ENCODE measurements at regions of chr3 and their contacts with region 1.

Region 1: DNA sequence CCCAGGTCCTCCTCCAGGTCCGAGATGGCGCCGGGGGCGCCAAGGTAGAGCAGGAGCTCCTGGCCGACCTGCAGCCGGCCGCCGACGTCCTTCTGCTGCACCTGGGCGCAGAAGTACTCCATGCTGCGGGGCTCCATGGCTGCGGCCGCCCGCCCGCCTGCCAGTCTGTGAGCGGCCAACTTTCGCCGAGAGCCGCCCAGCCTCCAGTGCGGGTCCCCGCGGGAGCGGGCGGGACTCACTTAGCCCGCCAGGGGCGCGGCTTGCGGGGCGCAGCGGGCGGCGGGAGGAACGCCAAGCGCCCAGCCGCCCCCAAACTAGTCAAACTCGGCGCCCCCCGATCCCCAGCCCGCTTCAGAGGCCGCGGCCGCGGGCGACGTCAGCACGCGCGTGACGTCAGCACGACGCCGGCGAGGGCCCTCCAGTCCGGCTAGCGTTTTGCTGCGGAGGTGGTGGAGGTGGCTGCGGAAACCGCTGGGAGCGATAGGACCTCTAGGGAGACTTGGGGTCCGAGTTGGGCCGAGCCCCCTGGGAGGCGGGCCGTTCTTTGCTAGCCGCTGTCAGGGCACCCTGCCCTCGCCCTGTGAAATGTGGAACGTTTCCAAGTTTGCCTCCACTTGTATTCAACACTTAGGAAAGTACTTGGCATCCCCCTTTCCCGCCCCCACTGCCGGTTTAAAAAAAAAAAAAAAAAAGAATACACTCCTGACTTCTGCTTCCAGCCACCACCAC is at the start of gene CLASP2:
- DNase-seq: peak; percentile 91 to 95 (median 95)
- ATAC-seq: peak; percentile 98 to 99
- H3K4me3 ChIP-seq: peak within 1 kb of the TSS; percentile 88
- H3K27ac ChIP-seq: peak within 1 kb of the TSS; percentile 97
- H3K4me1 ChIP-seq: peaks cover 2% of the 10 kb centered on the region
- H3K27me3 ChIP-seq: no peaks in the 10 kb centered on the region
- total RNA-seq, gene CLASP2: 55.3 to 77.1 (median 67.4) TPM

Region 2: DNA sequence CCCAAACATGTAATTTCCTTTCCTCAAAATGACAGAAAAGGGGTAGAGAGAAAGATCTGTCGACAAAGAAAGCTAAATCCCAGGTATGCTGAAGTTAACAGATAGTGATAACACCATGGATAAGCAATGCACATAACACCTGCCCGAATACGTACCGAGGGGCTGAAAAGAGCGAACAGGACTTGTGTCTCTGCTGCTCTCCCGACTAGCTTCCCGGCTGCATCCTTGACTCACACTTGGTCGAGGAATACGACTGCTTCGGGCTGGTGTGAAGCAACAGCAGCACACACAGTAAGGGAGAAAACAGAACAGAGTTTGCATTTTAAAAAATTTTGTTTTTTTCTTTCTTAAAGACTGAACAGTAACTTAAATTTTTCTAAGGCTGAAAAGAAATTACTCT is 136.4 kb before region 1 on chr3:
- intact Hi-C with region 1: no loop called
- DNase-seq: no peak
- ATAC-seq: no peak
- H3K4me3 ChIP-seq: no peak overlapping the region
- H3K27ac ChIP-seq: no peak overlapping the region
- H3K4me1 ChIP-seq: no peaks in the 10 kb centered on the region
- H3K27me3 ChIP-seq: no peaks in the 10 kb centered on the region

Region 3: DNA sequence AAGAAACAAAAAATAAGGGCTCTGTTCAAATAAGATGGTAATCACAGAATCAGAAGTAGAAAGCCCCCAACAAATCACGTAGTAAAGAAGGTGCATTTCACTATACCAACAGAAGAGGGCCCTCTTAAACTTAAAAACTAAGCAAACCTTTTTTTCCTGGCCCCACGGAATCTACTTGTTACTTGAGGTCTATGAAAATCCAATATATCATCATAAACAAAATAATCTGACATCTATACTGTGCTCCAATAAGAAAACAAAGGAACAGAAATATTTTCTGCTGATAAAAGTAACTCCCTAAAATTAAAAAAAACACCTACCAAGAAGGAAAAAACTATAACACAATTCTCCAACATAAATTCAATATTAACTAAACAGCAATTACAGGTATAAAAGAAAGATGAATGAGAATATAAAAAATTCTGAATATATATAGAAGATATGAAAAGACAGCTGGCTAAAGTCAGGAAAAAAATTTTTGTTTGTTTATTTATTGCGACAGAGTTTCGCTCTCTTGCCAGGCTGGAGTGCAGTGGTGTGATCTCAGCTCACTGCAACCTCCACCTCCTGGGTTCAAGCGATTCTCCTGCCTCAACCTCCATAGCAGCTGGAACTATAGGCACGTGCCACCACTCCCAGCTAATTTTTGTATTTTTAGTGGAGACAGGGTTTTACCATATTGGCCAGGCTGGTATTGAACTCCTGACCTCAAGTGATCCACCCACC is 81.7 kb before region 1 on chr3:
- intact Hi-C with region 1: loop called in 1 of 4 experiments (anchors 5 kb)
- DNase-seq: no peak
- ATAC-seq: no peak
- H3K4me3 ChIP-seq: no peak overlapping the region
- H3K27ac ChIP-seq: no peak overlapping the region
- H3K4me1 ChIP-seq: no peaks in the 10 kb centered on the region
- H3K27me3 ChIP-seq: no peaks in the 10 kb centered on the region

Region 4: GRCh38 chr3:33645060-33645647 is 72.9 kb before region 1 on chr3:
- intact Hi-C with region 1: loop called in 3 of 4 experiments (anchors 5 to 10 kb)
- DNase-seq: no peak
- ATAC-seq: peak; percentile 64 to 78
- H3K4me3 ChIP-seq: peak overlapping the region; percentile 70
- H3K27ac ChIP-seq: no peak overlapping the region
- H3K4me1 ChIP-seq: no peaks in the 10 kb centered on the region
- H3K27me3 ChIP-seq: no peaks in the 10 kb centered on the region

Region 5: GRCh38 chr3:33658991-33659848 is 58.8 kb before region 1 on chr3:
- intact Hi-C with region 1: loop called in 3 of 4 experiments (anchors 5 to 10 kb)
- DNase-seq: peak; percentile 64 to 90 (median 89)
- ATAC-seq: peak; percentile 99
- H3K4me3 ChIP-seq: peak overlapping the region; percentile 87
- H3K27ac ChIP-seq: peak overlapping the region; percentile 75
- H3K4me1 ChIP-seq: peaks cover 2% of the 10 kb centered on the region
- H3K27me3 ChIP-seq: no peaks in the 10 kb centered on the region

Region 6: DNA sequence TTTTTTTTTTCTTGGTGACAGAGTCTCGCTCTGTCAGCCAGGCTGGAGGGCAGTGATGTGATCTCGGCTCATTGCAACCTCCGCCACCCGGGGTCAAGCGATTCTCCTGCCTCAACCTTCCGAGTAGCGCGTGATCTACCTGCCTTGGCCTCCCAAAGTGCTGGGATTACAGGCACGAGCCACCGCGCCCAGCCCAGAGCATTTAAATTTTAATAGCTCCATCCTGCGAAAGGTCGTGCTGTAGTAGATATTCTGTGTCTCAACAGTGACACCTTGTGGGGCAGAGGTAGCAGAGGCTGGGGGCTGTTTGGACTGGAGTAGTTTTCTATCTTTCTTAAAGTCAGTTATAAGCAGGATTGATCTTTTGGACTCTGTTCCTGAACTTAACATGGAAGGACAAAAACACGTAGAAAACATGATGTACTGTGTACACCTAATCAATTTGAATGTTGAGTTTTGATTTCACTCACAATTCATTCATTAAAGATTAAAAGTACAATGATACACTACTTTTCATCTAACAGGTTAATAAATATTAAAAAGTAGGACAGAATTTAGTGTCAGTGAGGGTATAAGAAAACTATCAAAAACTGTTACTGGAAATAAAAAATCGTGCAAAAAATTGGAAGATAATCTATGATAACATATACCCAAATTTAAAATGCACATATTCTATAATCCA is 69.4 kb after region 1 on chr3:
- intact Hi-C with region 1: loop called in 1 of 4 experiments (anchors 5 kb)
- DNase-seq: peak; percentile 27 to 64 (median 62)
- ATAC-seq: peak; percentile 87 to 93
- H3K4me3 ChIP-seq: peak overlapping the region; percentile 33
- H3K27ac ChIP-seq: no peak overlapping the region
- H3K4me1 ChIP-seq: no peaks in the 10 kb centered on the region
- H3K27me3 ChIP-seq: no peaks in the 10 kb centered on the region